ENCODE measurements at regions of chr10 and their contacts with region 1.

Region 1: GRCh38 chr10:63142136-63142535 is 9.0 kb downstream of the NRBF2 start:
- DNase-seq: no peak
- ATAC-seq: no peak
- H3K4me3 ChIP-seq: no peak overlapping the region
- H3K27ac ChIP-seq: no peak overlapping the region
- H3K4me1 ChIP-seq: peaks cover 12% of the 10 kb centered on the region
- H3K27me3 ChIP-seq: no peaks in the 10 kb centered on the region
- CTCF ChIP-seq: no peak

Region 2: GRCh38 chr10:62528441-62528840 is 613.7 kb before region 1 on chr10:
- CTCF ChIA-PET with region 1: interaction called, 12 read pairs
- POLR2A ChIA-PET with region 1: interaction called, 6 read pairs
- intact Hi-C with region 1: no loop called
- DNase-seq: peak; percentile 60
- ATAC-seq: peak; percentile 81
- H3K4me3 ChIP-seq: no peak overlapping the region
- H3K27ac ChIP-seq: no peak overlapping the region
- H3K4me1 ChIP-seq: no peaks in the 10 kb centered on the region
- H3K27me3 ChIP-seq: no peaks in the 10 kb centered on the region
- CTCF ChIP-seq: no peak

Region 3: DNA sequence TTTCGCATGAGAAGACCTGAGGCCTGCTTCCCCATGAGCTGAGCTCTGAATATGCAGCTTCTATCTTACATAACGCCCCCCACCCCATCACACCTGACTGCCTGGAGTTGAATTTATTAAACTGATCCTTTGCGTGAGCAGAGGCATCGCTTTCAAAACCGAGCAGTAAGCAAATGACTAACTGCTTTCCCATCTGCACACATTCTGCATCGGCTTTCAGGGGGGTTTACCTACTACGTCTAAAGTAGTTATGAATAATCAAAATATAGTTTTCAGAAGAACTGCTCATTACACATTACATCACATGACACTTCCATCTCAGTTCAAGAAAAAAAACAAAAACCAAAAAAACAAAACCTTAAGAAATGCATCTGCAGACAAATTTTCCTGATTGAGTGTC is 271.3 kb before region 1 on chr10:
- CTCF ChIA-PET with region 1: no interaction called
- POLR2A ChIA-PET with region 1: no interaction called
- intact Hi-C with region 1: no loop called
- DNase-seq: no peak
- ATAC-seq: no peak
- H3K4me3 ChIP-seq: no peak overlapping the region
- H3K27ac ChIP-seq: no peak overlapping the region
- H3K4me1 ChIP-seq: peaks cover 14% of the 10 kb centered on the region
- H3K27me3 ChIP-seq: no peaks in the 10 kb centered on the region
- CTCF ChIP-seq: no peak